CD8-positive, alpha-beta T cell (primary cell): ENCODE measurements at regions of chr5 and their contacts with region 1.

Region 1: GRCh38 chr5:86125731-86126601 is 491.8 kb upstream of the COX7C start:
- DNase-seq: no peak
- ATAC-seq: no peak
- H3K4me3 ChIP-seq: no peak overlapping the region
- H3K4me3 Mint-ChIP-seq: no peak overlapping the region
- H3K27ac ChIP-seq: no peak overlapping the region
- H3K27ac Mint-ChIP-seq: no peak overlapping the region
- H3K4me1 ChIP-seq: no peaks in the 10 kb centered on the region
- H3K4me1 Mint-ChIP-seq: no peaks in the 10 kb centered on the region
- H3K27me3 ChIP-seq: no peaks in the 10 kb centered on the region
- H3K27me3 Mint-ChIP-seq: no peaks in the 10 kb centered on the region
- CTCF ChIP-seq: no peak

Region 2: GRCh38 chr5:86143837-86144236 is 17.9 kb after region 1 on chr5:
- CTCF ChIA-PET with region 1: no interaction called
- POLR2A ChIA-PET with region 1: no interaction called
- intact Hi-C with region 1: loop called in 1 of 2 experiments (anchors 1 kb)
- DNase-seq: no peak
- ATAC-seq: no peak
- H3K4me3 ChIP-seq: no peak overlapping the region
- H3K4me3 Mint-ChIP-seq: no peak overlapping the region
- H3K27ac ChIP-seq: no peak overlapping the region
- H3K27ac Mint-ChIP-seq: no peak overlapping the region
- H3K4me1 ChIP-seq: no peaks in the 10 kb centered on the region
- H3K4me1 Mint-ChIP-seq: no peaks in the 10 kb centered on the region
- H3K27me3 ChIP-seq: no peaks in the 10 kb centered on the region
- H3K27me3 Mint-ChIP-seq: no peaks in the 10 kb centered on the region
- CTCF ChIP-seq: no peak